HepG2 (cell line): ENCODE measurements at regions of chr17 and their contacts with region 1.

Region 1: DNA sequence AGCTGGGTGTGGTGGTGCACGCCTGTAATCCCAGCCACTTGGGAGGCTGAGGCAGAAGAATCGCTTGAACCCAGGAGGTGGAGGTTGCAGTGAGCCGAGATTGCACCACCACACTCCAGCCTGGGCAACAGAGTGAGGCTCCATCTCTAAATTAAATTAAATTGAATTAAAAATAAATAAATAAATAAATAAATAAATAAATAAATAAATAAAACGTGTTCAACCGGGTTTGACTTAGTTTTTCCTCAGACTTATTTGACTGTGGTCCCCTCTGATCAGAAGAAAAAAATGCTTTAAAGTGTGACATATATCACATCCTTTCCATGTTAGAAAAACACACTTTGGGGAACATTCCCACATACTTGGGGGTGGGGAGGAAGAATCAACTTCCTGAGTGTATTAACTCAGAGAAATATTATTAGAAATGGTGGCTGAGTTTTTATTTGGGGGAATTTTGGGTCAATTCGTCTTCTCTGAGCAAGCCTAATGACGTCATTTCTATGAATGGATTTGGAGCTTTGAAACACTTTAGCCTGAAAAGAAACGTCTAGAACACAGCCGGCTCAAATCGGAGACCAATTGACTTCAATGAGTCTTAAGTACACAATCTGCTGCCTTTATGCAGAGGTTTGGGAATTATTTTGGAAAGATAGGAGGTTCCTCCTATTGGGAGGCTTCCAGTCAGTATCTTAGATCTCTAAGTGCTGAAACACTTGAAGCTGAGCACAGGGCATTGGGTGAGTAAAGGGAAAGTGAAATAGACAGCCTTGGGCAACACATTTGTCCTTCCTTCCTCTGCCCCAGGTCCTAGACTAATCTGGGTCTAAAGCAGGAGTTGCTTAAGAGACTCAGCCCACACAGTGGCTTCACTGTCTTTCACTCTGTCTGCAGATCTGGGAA is 132.6 kb downstream of the PITPNC1 start:
- DNase-seq: no peak
- ATAC-seq: peak; percentile 68
- H3K4me3 ChIP-seq: no peak overlapping the region
- H3K27ac ChIP-seq: no peak overlapping the region
- H3K4me1 ChIP-seq: no peaks in the 10 kb centered on the region
- H3K27me3 ChIP-seq: no peaks in the 10 kb centered on the region
- CTCF ChIP-seq: no peak
- EP300 ChIP-seq: no peak
- POLR2A ChIP-seq: no peak
- RAD21 ChIP-seq: no peak

Region 2: DNA sequence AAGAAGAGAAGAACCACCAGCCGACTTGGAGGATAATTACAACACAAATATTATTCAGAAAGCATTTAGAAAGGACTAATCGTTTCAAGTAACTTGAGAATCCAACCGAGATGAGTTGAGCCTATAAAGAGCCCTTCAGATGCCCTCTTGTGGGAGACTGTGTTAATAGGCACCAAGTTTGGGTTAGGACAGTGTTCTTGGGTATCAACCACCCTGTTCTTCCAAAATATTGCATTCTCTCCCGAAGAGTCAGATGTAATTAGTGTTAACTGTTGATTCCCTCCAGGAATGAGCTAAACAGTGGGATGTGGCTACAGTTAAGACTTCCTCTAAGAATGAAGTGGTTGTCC is 120.3 kb after region 1 on chr17:
- CTCF ChIA-PET with region 1: no interaction called
- POLR2A ChIA-PET with region 1: no interaction called
- in situ Hi-C with region 1: no loop called
- intact Hi-C with region 1: loop called (anchors 2 kb)
- DNase-seq: peak; percentile 24
- ATAC-seq: peak; percentile 20; the same call in 1 of the 3 replicates
- H3K4me3 ChIP-seq: no peak overlapping the region
- H3K27ac ChIP-seq: no peak overlapping the region
- H3K4me1 ChIP-seq: peaks cover 17% of the 10 kb centered on the region; the same call in 1 of the 2 replicates
- H3K27me3 ChIP-seq: no peaks in the 10 kb centered on the region
- CTCF ChIP-seq: peak; percentile 47
- EP300 ChIP-seq: no peak
- POLR2A ChIP-seq: no peak
- RAD21 ChIP-seq: no peak